CD8-positive, alpha-beta memory T cell (primary cell): ENCODE measurements at regions of chr21 and their contacts with region 1.

Region 1: DNA sequence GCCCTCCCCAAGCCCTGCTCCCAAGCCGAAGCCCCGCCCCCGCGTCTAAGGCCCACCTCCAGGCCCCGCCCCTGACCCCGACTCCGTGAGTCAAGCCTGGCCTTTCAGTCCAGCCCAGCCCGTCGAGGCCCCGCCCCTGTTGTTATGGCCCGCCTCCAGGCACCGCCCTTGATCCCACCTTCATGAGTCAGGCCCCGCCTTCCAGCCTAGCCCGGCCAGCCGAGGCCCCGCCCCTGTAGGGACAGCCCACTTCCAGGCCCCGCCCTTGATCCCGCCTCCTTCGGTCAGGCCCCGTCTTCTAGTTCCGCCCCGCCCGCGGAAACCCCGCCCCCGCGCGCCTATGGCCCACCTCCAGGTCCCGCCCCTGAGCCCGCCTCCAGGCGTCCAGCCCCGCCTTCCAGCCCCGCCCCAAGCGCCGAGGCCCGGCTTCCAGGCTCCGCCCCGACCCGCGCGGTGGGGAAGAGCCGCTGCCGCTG is 247 bp upstream of the DOP1B start:
- DNase-seq: peak; percentile 99 to 100 (median 100)
- H3K4me3 ChIP-seq: peak overlapping the region; percentile 78
- H3K4me3 Mint-ChIP-seq: peak overlapping the region; percentile 78 to 92 (median 85)
- H3K27ac ChIP-seq: peak overlapping the region; percentile 61
- H3K27ac Mint-ChIP-seq: peak overlapping the region in 6 of 8 donors; percentile 17 to 80 (median 64)
- H3K4me1 ChIP-seq: peaks cover 20% of the 10 kb centered on the region
- H3K4me1 Mint-ChIP-seq: peaks cover 23 to 39% (median 37%) of the 10 kb centered on the region in 3 donors
- H3K27me3 ChIP-seq: no peaks in the 10 kb centered on the region
- H3K27me3 Mint-ChIP-seq: no peaks in the 10 kb centered on the region

Region 2: DNA sequence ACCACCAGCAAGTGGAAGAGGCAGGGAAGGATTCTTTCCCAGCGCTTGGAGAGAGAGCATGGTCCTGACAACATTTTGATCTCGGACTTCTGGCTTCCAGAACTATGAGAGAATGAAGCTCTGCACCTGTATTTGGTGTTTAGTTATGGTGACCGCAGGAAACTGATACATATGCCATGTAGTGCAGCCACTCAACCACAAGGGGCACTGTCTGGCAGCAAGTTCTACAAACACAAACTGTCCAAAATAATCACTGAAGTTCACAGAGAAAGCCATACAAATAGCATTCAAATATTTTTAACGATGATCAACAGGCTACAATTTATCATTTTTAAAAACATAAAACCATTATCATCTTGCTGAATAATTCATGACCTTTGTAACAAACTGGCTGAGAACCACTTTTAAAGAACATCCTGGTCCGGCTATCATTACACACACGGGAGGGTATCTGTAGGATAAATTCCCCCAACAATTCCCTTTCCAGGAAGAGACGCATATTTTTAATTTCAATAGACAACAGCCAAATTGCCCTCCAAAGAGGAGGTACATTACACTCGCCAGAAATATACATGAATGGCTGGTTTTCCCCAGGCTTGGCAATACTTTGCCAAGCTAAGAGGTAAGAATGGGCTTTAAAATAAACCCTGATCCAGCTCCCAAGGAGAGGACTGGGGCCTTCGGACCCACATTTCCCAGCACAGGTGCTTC is 30.7 kb before region 1 on chr21:
- CTCF ChIA-PET with region 1: no interaction called
- POLR2A ChIA-PET with region 1: no interaction called
- DNase-seq: peak; percentile 21 to 70 (median 35)
- H3K4me3 ChIP-seq: no peak overlapping the region
- H3K4me3 Mint-ChIP-seq: peak overlapping the region in 1 of 7 donors; percentile 46
- H3K27ac ChIP-seq: no peak overlapping the region
- H3K27ac Mint-ChIP-seq: peak overlapping the region in 2 of 8 donors; percentile 24 to 72
- H3K4me1 ChIP-seq: peaks cover 6% of the 10 kb centered on the region
- H3K4me1 Mint-ChIP-seq: peaks cover 11 to 23% (median 16%) of the 10 kb centered on the region in 3 donors
- H3K27me3 ChIP-seq: no peaks in the 10 kb centered on the region
- H3K27me3 Mint-ChIP-seq: peaks cover 2 to 3% of the 10 kb centered on the region in 2 donors

Region 3: GRCh38 chr21:36169436-36170128 is 13.2 kb after region 1 on chr21:
- CTCF ChIA-PET with region 1: interaction called, 19 read pairs
- POLR2A ChIA-PET with region 1: interaction called, 8 read pairs
- DNase-seq: no peak
- H3K4me3 ChIP-seq: no peak overlapping the region
- H3K4me3 Mint-ChIP-seq: no peak overlapping the region
- H3K27ac ChIP-seq: no peak overlapping the region
- H3K27ac Mint-ChIP-seq: no peak overlapping the region
- H3K4me1 ChIP-seq: peaks cover 7% of the 10 kb centered on the region
- H3K4me1 Mint-ChIP-seq: peaks cover 6 to 9% (median 8%) of the 10 kb centered on the region in 3 donors
- H3K27me3 ChIP-seq: no peaks in the 10 kb centered on the region
- H3K27me3 Mint-ChIP-seq: no peaks in the 10 kb centered on the region

Region 4: GRCh38 chr21:36209626-36210171 is 53.3 kb after region 1 on chr21:
- CTCF ChIA-PET with region 1: interaction called, 10 read pairs
- POLR2A ChIA-PET with region 1: interaction called, 3 read pairs
- DNase-seq: peak; percentile 20 to 59 (median 26)
- H3K4me3 ChIP-seq: no peak overlapping the region
- H3K4me3 Mint-ChIP-seq: no peak overlapping the region
- H3K27ac ChIP-seq: no peak overlapping the region
- H3K27ac Mint-ChIP-seq: peak overlapping the region in 3 of 8 donors; percentile 31 to 71 (median 52)
- H3K4me1 ChIP-seq: no peaks in the 10 kb centered on the region
- H3K4me1 Mint-ChIP-seq: peaks cover 0 to 6% (median 4%) of the 10 kb centered on the region in 3 donors
- H3K27me3 ChIP-seq: no peaks in the 10 kb centered on the region
- H3K27me3 Mint-ChIP-seq: no peaks in the 10 kb centered on the region

Region 5: DNA sequence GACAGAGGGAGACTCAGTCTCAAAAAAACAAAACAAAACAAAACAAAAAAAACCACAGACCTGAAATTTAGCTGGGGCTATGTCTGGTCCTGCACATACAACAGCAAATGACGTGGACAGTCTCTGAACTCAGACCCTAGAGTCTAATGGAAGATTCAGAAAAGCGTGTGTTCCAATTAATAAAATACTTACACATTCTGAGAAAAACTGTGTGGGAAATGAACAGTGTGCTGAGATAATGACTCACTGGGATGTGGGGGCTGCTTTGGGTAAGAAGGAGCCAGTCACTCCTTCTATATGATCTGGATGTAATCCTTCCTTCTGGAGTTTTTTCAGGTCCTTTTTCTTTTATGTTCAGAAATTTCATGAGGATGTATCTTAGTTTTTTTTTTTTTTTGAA is 294.1 kb after region 1 on chr21:
- CTCF ChIA-PET with region 1: no interaction called
- POLR2A ChIA-PET with region 1: no interaction called
- DNase-seq: no peak
- H3K4me3 ChIP-seq: no peak overlapping the region
- H3K4me3 Mint-ChIP-seq: no peak overlapping the region
- H3K27ac ChIP-seq: no peak overlapping the region
- H3K27ac Mint-ChIP-seq: peak overlapping the region in 1 of 8 donors; percentile 82
- H3K4me1 ChIP-seq: no peaks in the 10 kb centered on the region
- H3K4me1 Mint-ChIP-seq: no peaks in the 10 kb centered on the region
- H3K27me3 ChIP-seq: no peaks in the 10 kb centered on the region
- H3K27me3 Mint-ChIP-seq: peaks cover 11 to 14% of the 10 kb centered on the region in 2 donors